MCF 10A (cell line): ENCODE measurements at regions of chr1 and their contacts with region 1.

Region 1: GRCh38 chr1:159161001-159161718 is 10.3 kb upstream of the CADM3 start:
- DNase-seq: peak; percentile 99
- H3K4me3 Mint-ChIP-seq: peak overlapping the region; percentile 43
- H3K27ac Mint-ChIP-seq: peak overlapping the region; percentile 69
- H3K4me1 Mint-ChIP-seq: peaks cover 34% of the 10 kb centered on the region
- H3K27me3 Mint-ChIP-seq: peaks cover 36% of the 10 kb centered on the region
- CTCF ChIP-seq: peak; percentile 100

Region 2: GRCh38 chr1:159071970-159072582 is 89.1 kb before region 1 on chr1:
- CTCF ChIA-PET with region 1: no interaction called
- POLR2A ChIA-PET with region 1: no interaction called
- intact Hi-C with region 1: no loop called
- DNase-seq: peak; percentile 78
- H3K4me3 Mint-ChIP-seq: no peak overlapping the region
- H3K27ac Mint-ChIP-seq: no peak overlapping the region
- H3K4me1 Mint-ChIP-seq: no peaks in the 10 kb centered on the region
- H3K27me3 Mint-ChIP-seq: no peaks in the 10 kb centered on the region
- CTCF ChIP-seq: peak; percentile 91

Region 3: DNA sequence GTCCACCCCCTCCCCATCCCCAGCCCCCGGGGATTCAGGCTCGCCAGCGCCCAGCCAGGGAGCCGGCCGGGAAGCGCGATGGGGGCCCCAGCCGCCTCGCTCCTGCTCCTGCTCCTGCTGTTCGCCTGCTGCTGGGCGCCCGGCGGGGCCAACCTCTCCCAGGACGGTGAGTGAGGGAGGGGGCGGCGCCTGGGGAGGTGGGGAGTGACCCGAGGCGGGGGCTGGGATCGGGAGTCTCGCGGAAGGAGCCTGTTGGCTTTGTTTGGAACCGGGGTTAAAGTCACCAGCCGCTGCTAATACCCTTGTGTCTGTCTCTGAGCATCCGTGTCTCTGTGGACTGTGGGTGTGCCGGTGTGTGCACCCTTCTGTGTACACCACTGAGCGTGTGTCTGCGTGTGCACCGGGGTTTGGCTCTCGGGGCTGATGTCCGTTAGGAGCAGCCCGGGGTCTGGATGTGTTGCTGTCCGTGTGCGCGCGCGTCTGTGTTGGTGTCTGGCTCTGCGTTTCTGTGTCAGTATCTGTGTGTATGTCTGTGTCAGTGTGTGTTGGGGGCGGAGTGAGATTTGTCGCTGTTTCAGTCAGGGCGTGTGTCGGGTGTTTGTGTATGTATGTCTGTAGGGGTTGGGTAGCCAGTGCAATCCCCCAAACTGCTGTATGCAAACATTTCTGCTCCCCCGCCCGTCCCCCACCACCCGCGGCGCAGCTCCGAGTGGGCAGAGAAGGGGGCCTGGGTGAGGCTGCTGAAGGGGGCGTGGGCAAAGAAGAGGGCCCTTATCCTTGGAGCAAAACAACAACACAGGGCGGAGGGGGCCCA is 10.7 kb after region 1 on chr1:
- CTCF ChIA-PET with region 1: interaction called, 11 read pairs
- POLR2A ChIA-PET with region 1: interaction called, 4 read pairs
- intact Hi-C with region 1: no loop called
- DNase-seq: peak; percentile 44
- H3K4me3 Mint-ChIP-seq: peak overlapping the region; percentile 83
- H3K27ac Mint-ChIP-seq: peak overlapping the region; percentile 1
- H3K4me1 Mint-ChIP-seq: peaks cover 60% of the 10 kb centered on the region
- H3K27me3 Mint-ChIP-seq: peaks cover 11% of the 10 kb centered on the region
- CTCF ChIP-seq: no peak

Region 4: GRCh38 chr1:159197561-159198557 is 36.7 kb after region 1 on chr1:
- CTCF ChIA-PET with region 1: interaction called, 386 read pairs
- POLR2A ChIA-PET with region 1: interaction called, 18 read pairs
- intact Hi-C with region 1: loop called (anchors 1 kb)
- DNase-seq: peak; percentile 88
- H3K4me3 Mint-ChIP-seq: no peak overlapping the region
- H3K27ac Mint-ChIP-seq: no peak overlapping the region
- H3K4me1 Mint-ChIP-seq: peaks cover 32% of the 10 kb centered on the region
- H3K27me3 Mint-ChIP-seq: no peaks in the 10 kb centered on the region
- CTCF ChIP-seq: peak; percentile 95

Region 5: GRCh38 chr1:159775716-159776115 is 614.6 kb after region 1 on chr1:
- CTCF ChIA-PET with region 1: interaction called, 147 read pairs
- POLR2A ChIA-PET with region 1: interaction called, 17 read pairs
- intact Hi-C with region 1: loop called (anchors 1 kb)
- DNase-seq: peak; percentile 81
- H3K4me3 Mint-ChIP-seq: no peak overlapping the region
- H3K27ac Mint-ChIP-seq: peak overlapping the region; percentile 89
- H3K4me1 Mint-ChIP-seq: peaks cover 68% of the 10 kb centered on the region
- H3K27me3 Mint-ChIP-seq: no peaks in the 10 kb centered on the region
- CTCF ChIP-seq: peak; percentile 63

Region 6: GRCh38 chr1:159790237-159790917 is 629.2 kb after region 1 on chr1:
- CTCF ChIA-PET with region 1: interaction called, 21 read pairs
- POLR2A ChIA-PET with region 1: interaction called, 7 read pairs
- intact Hi-C with region 1: loop called (anchors 1 kb)
- DNase-seq: peak; percentile 66
- H3K4me3 Mint-ChIP-seq: no peak overlapping the region
- H3K27ac Mint-ChIP-seq: peak overlapping the region; percentile 29
- H3K4me1 Mint-ChIP-seq: peaks cover 32% of the 10 kb centered on the region
- H3K27me3 Mint-ChIP-seq: no peaks in the 10 kb centered on the region
- CTCF ChIP-seq: peak; percentile 85